ENCODE measurements at regions of chr18 and their contacts with region 1.

Region 1: DNA sequence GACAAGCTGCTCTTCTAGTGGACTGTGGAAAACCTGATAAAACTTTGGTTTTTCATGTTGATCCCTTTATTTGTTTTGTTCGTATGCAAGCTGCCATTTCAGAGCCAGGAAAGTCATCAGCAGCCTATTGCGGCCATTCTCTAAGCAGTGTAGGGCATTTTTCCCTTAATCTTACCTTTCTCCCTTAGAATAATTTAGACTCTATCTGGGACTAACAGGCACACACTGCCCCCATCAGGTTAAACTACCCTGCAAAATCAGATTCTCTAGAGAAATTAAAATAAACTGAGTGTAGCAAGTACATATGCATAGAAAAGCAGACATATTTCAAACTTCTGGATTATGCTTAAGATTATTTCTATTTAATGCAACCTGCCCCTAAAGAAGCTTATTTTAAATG is 347.5 kb downstream of the METTL4 start:
- DNase-seq: peak; percentile 52
- H3K4me3 Mint-ChIP-seq: peak overlapping the region; percentile 51
- H3K27ac Mint-ChIP-seq: peak overlapping the region; percentile 96
- H3K4me1 Mint-ChIP-seq: peaks cover 28% of the 10 kb centered on the region
- H3K27me3 Mint-ChIP-seq: no peaks in the 10 kb centered on the region
- CTCF ChIP-seq: peak; percentile 40

Region 2: DNA sequence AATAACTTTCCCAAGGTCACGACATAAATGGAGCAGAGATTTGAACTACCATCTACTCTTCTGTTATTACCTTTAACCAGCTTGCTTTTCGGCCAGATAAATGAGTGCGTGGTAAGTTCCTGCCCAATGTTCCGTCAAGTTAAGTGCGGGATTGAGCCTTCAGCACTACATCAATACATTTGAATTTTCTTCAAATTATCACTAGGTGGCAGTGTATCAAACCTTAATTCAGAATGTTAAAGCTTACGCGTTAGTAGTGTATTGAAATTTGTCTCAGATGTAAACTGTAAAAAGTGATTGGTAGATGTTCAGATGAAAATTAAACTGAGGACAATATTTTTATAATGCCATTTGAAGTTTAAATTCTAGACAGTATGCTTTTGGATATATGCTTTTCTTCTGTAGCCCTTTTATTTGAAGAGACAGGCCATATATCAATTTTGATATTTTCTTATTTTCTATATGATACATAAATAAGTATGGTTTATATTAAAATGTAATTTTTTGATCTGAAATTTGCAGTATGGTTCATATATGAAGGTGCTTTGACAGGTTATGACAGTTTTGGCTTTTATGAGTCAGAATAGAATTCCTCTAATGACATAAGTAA is 637.9 kb before region 1 on chr18:
- CTCF ChIA-PET with region 1: no interaction called
- intact Hi-C with region 1: loop called (anchors 5 kb)
- DNase-seq: no peak
- H3K4me3 Mint-ChIP-seq: no peak overlapping the region
- H3K27ac Mint-ChIP-seq: no peak overlapping the region
- H3K4me1 Mint-ChIP-seq: no peaks in the 10 kb centered on the region
- H3K27me3 Mint-ChIP-seq: peaks cover 24% of the 10 kb centered on the region
- CTCF ChIP-seq: peak; percentile 42

Region 3: GRCh38 chr18:1914490-1914889 is 309.4 kb before region 1 on chr18:
- CTCF ChIA-PET with region 1: no interaction called
- intact Hi-C with region 1: loop called (anchors 2 kb)
- DNase-seq: peak; percentile 18
- H3K4me3 Mint-ChIP-seq: no peak overlapping the region
- H3K27ac Mint-ChIP-seq: no peak overlapping the region
- H3K4me1 Mint-ChIP-seq: no peaks in the 10 kb centered on the region
- H3K27me3 Mint-ChIP-seq: no peaks in the 10 kb centered on the region
- CTCF ChIP-seq: peak; percentile 48

Region 4: GRCh38 chr18:2104620-2105462 is 119.0 kb before region 1 on chr18:
- CTCF ChIA-PET with region 1: interaction called, 7 read pairs
- intact Hi-C with region 1: loop called (anchors 1 kb)
- DNase-seq: peak; percentile 71
- H3K4me3 Mint-ChIP-seq: no peak overlapping the region
- H3K27ac Mint-ChIP-seq: no peak overlapping the region
- H3K4me1 Mint-ChIP-seq: no peaks in the 10 kb centered on the region
- H3K27me3 Mint-ChIP-seq: no peaks in the 10 kb centered on the region
- CTCF ChIP-seq: peak; percentile 83

Region 5: DNA sequence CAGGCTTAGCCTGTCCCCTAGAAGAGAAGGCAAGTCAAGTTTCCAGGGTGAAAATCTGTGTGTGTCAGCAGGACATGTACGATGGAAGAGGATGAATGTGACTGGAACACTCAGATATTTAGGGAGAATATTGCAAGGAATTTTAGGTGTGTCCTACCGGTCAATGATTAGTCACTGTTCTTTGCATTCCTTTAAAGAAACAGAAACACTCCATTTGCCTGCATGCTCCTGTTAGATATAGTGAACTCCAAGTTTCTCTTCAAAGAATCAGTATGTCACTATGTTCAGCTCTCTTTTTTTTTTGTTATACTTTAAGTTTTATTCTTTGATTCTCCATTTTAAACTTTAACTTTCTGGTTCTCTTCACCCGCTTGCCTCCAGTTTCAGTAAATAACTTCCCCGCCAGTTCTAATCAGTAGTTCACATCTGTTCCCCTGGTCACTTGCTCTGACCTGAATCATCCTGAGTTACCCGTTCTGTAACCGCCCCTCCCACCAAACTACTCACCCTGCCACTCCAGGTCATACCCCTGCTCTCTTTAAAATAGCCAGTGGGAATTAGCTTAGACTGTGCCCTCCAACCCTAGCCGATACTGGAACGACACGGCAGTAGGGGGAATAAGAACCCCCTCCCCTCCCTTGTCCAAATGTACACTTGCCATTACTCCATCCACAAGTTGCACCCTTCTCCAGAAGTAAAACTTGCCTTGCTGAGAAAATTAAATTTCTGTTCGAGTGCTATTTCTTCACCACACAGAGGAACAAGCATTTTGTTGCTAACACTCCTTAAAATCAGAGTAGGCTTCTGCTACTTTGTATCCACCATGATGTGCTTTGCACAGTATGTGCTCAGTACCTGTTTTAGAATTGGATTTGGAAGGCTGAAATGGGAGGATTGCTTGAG is 79.0 kb after region 1 on chr18:
- CTCF ChIA-PET with region 1: interaction called, 3 read pairs
- intact Hi-C with region 1: loop called (anchors 10 kb)
- DNase-seq: peak; percentile 57
- H3K4me3 Mint-ChIP-seq: peak overlapping the region; percentile 58
- H3K27ac Mint-ChIP-seq: peak overlapping the region; percentile 87
- H3K4me1 Mint-ChIP-seq: peaks cover 57% of the 10 kb centered on the region
- H3K27me3 Mint-ChIP-seq: no peaks in the 10 kb centered on the region
- CTCF ChIP-seq: no peak